Panc1 (cell line): ENCODE measurements at regions of chr2 and their contacts with region 1.

Region 1: DNA sequence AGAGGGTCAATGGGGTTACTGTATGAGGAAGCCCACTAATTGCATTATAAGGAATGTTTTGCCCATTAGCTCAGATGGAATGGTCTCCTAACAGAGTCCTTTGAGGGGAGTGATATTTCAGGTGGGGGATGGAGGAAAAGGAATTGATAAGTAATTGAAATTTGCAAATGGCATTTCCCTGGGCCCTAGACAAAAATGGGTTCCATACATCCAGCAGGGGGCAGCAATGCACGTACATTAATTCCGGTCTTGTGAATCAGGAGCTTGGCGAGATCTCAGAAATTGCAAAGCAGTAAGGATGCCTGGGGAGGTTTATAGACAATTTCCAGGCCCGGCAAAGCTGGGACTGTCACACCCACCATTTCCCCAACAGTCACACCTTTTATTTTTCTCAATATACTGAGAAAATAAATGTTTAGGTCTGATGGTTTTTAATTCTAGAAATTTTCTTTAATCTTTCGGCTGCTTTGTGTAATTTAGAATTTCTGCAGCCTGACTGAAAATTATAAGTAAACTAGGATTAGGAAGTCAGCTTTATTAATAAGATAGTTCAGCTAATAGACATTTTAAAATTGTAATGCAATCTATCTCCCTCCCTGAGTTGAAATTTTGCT is 122.8 kb downstream of the LYPD1 start:
- DNase-seq: peak; percentile 32
- ATAC-seq: peak; percentile 74
- H3K4me3 ChIP-seq: no peak overlapping the region
- H3K27ac ChIP-seq: no peak overlapping the region
- H3K4me1 ChIP-seq: no peaks in the 10 kb centered on the region
- H3K27me3 ChIP-seq: no peaks in the 10 kb centered on the region
- CTCF ChIP-seq: peak; percentile 83

Region 2: GRCh38 chr2:132267105-132267497 is 280.1 kb before region 1 on chr2:
- CTCF ChIA-PET with region 1: no interaction called
- POLR2A ChIA-PET with region 1: no interaction called
- in situ Hi-C with region 1: no loop called
- intact Hi-C with region 1: no loop called
- DNase-seq: no peak
- ATAC-seq: peak; percentile 46; the same call in 1 of the 2 replicates
- H3K4me3 ChIP-seq: no peak overlapping the region
- H3K27ac ChIP-seq: no peak overlapping the region
- H3K4me1 ChIP-seq: no peaks in the 10 kb centered on the region
- H3K27me3 ChIP-seq: peaks cover 2% of the 10 kb centered on the region; the same call in 1 of the 2 replicates
- CTCF ChIP-seq: no peak

Region 3: DNA sequence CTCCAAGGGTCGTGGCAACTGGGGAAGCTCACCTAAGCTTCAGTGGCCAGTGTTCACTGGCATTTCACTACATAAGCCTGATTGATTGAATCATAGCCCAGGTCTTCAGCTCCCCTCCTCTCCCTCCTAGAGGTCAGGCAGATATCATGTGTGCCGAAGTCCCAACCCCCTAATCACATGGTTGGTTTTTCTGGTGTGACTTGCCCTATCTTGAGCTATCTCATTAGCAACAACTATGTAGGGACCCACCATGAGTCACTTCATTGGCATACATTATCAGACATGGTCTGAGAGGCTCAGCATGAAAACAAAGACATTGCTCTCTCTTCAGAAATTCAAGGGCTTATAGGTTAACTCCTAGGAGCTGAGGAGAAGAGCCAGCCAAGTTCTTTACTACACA is 46.0 kb after region 1 on chr2:
- CTCF ChIA-PET with region 1: no interaction called
- POLR2A ChIA-PET with region 1: no interaction called
- in situ Hi-C with region 1: no loop called
- intact Hi-C with region 1: no loop called
- DNase-seq: no peak
- ATAC-seq: no peak
- H3K4me3 ChIP-seq: no peak overlapping the region
- H3K27ac ChIP-seq: no peak overlapping the region
- H3K4me1 ChIP-seq: no peaks in the 10 kb centered on the region
- H3K27me3 ChIP-seq: no peaks in the 10 kb centered on the region
- CTCF ChIP-seq: no peak

Region 4: DNA sequence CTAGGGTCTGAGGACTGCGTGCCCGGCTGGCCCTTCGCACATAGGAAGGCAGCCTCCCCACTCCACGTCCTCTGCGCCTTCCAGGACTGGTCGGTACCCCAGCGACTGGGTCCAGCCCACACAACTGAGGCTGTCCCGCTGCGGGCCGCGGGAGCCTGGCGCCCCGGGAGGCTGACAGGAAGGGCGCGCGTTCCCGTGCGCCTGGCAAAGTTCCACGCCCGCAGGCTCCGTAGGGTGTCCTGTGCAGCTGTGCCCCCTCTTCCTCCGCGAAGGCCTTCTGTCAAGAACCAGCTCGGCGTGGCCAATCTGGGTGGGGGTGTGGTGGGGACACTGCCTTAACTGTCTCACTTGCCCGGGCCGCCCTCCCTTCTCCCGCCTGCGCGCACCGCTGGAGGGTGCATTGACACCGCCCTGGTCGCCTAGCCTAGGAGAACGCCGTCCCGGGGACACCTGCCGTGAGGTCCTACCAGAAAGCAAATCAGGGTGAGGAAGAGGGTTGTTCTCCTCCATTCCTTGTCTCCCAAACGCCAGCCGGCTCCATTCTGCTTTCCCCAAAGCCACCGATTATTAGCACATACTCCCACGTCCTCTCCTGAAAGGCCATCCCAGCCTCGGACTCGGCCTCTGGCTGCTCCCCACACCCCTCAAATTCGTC is 123.4 kb after region 1 on chr2:
- CTCF ChIA-PET with region 1: no interaction called
- POLR2A ChIA-PET with region 1: no interaction called
- in situ Hi-C with region 1: no loop called
- intact Hi-C with region 1: loop called (anchors 5 kb)
- DNase-seq: no peak
- ATAC-seq: peak; percentile 63
- H3K4me3 ChIP-seq: peak overlapping the region; percentile 32 to 48
- H3K27ac ChIP-seq: no peak overlapping the region
- H3K4me1 ChIP-seq: peaks cover 6% of the 10 kb centered on the region
- H3K27me3 ChIP-seq: peaks cover 47% of the 10 kb centered on the region
- CTCF ChIP-seq: no peak